Gastrocnemius medialis (tissue), 4 donors: ENCODE measurements at regions of chr1 and their contacts with region 1.

Region 1: GRCh38 chr1:234722904-234723720 is 113.1 kb upstream of the IRF2BP2 start:
- DNase-seq: peak in 1 of 2 donors; percentile 73
- ATAC-seq: peak; percentile 6 to 11
- H3K4me3 ChIP-seq: peak overlapping the region; percentile 5 to 27 (median 10)
- H3K27ac ChIP-seq: peak overlapping the region; percentile 93 to 98 (median 96)
- H3K4me1 ChIP-seq: peaks cover 95 to 96% of the 10 kb centered on the region in 2 donors
- H3K27me3 ChIP-seq: no peaks in the 10 kb centered on the region
- CTCF ChIP-seq: no peak
- POLR2A ChIP-seq: no peak

Region 2: GRCh38 chr1:234413990-234414389 is 309.1 kb before region 1 on chr1:
- in situ Hi-C with region 1: no loop called
- intact Hi-C with region 1: no loop called
- DNase-seq: no peak
- ATAC-seq: no peak
- H3K4me3 ChIP-seq: no peak overlapping the region
- H3K27ac ChIP-seq: no peak overlapping the region
- H3K4me1 ChIP-seq: no peaks in the 10 kb centered on the region
- H3K27me3 ChIP-seq: no peaks in the 10 kb centered on the region
- CTCF ChIP-seq: no peak
- POLR2A ChIP-seq: no peak

Region 3: DNA sequence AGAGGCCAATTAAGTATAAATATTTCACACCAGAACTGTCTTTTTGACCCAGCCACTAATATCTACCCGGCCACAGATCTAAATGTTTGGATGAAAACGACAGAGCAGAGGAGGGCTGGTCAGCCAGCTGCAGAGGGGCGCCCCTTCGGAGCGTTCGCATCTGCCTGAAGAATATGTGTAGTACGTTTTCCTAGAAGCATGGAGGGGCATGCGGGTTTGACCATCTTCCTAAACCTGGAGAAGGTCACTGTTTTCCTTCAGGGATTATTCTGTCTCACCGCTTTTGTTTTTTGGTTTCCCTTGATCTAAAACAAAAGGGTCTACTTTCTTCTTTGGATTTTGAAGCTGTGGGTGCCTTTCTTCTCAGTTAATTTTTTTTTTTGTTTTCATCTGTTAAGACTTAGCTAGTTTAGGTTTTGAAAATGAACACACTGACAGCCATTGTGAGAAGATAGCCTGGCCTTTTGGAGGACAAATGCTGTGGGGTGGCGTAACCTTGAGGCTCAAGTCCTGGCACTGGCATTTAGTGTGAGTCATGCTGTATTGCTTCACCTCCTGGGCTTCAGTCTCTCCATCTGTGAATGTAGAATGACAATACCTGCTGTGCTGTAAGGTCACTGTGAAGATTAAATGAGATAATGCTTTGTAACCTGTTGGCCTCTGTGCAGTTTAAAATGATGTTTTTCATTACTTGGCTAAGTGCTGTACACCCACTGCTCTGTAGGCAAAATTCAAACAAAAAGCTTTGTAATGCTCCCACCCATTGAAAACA is 39.1 kb before region 1 on chr1:
- in situ Hi-C with region 1: no loop called
- intact Hi-C with region 1: loop called (anchors 2 kb)
- DNase-seq: peak; percentile 85 to 91
- ATAC-seq: peak; percentile 100
- H3K4me3 ChIP-seq: no peak overlapping the region
- H3K27ac ChIP-seq: peak overlapping the region; percentile 67 to 83 (median 75)
- H3K4me1 ChIP-seq: peaks cover 8 to 11% of the 10 kb centered on the region in 2 donors
- H3K27me3 ChIP-seq: no peaks in the 10 kb centered on the region
- CTCF ChIP-seq: no peak
- POLR2A ChIP-seq: no peak

Region 4: DNA sequence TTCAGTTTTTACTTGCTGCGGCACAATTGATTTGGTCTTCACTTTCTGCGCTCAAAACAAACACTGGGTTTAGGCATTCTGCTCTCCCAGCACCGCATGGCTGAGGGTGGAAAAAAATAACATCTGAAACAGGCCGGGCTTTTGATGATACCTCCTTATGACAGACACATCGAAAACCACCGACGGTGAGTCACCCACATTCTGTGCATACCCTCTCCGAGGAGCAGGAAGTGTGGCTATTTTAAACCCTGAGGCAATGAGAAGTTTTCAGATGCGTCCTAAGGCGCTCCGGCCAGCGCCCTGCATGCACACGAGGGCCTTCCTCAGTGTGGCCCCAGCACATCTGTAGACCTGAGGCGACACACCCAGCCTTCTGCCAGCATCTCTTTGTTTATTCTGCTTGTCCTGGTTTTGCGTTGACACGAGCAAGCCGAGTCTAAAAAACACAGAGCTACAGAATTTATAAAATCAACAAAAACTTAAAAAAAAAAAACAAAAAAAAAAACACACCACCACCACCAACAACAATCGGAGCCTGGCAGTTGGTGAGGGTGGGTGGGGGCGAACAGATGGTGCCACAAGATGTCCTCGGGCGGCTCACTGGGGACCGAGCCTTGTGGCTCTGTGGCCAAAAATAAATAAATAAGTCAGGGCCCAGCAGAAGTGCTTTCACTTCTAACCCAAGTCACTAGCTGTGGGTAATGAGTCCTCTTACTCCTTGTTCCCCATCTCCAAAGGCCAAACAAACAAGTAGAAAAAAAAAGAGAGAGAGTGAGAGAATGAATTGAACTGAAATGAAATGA is 49.4 kb after region 1 on chr1:
- in situ Hi-C with region 1: no loop called
- intact Hi-C with region 1: loop called (anchors 1 kb)
- DNase-seq: peak; percentile 90 to 92
- ATAC-seq: peak; percentile 99
- H3K4me3 ChIP-seq: no peak overlapping the region
- H3K27ac ChIP-seq: peak overlapping the region; percentile 63 to 77 (median 70)
- H3K4me1 ChIP-seq: peaks cover 13 to 18% of the 10 kb centered on the region in 2 donors
- H3K27me3 ChIP-seq: peaks cover 12 to 13% (median 13%) of the 10 kb centered on the region in 3 donors
- CTCF ChIP-seq: no peak
- POLR2A ChIP-seq: peak; percentile 43 to 66

Region 5: GRCh38 chr1:234887016-234887900 is 164.1 kb after region 1 on chr1:
- in situ Hi-C with region 1: loop called in 1 of 4 experiments (anchors 25 kb)
- intact Hi-C with region 1: loop called (anchors 5 kb)
- DNase-seq: peak; percentile 59 to 82
- ATAC-seq: peak; percentile 48 to 57
- H3K4me3 ChIP-seq: peak overlapping the region in 3 of 4 donors; percentile 3 to 42 (median 18)
- H3K27ac ChIP-seq: peak overlapping the region; percentile 90 to 100 (median 96)
- H3K4me1 ChIP-seq: peaks cover 36 to 38% of the 10 kb centered on the region in 2 donors
- H3K27me3 ChIP-seq: no peaks in the 10 kb centered on the region
- CTCF ChIP-seq: no peak
- POLR2A ChIP-seq: peak in 1 of 2 donors; percentile 25

Region 6: DNA sequence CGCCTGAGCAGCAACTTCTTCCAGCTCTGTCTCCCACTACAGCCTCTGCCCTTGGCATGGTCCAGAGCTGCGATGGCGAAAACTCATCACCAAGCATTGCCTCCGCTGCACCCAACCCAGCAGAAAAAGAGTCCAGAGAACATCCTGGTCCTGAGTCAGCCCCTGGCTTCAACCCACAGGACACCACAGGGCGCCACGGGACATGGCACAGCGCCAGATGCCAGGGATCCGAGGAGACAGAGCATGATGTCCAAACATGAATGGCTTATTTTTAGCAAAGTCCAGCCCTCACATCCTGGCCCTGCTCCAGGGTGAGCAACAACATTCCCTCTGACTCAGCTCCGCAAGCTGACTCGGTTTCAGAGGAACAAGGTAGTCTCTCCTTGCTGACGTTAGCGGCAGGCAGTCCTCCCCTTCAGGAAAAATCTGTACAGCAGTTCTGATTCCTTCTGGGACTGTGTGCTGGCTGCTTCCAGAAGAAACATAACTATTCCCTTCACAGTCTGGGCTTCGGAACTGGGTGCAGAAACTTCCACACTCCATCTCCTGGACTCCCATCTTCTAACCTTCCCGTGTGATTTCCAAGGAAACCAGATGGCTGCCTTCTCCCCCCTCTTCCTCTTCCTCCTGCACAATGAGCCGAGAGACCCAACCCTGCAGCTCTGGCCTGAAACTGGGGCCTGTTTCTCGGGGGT is 274.2 kb after region 1 on chr1:
- in situ Hi-C with region 1: no loop called
- intact Hi-C with region 1: loop called (anchors 5 kb)
- DNase-seq: peak; percentile 99 to 100
- ATAC-seq: peak; percentile 88 to 93
- H3K4me3 ChIP-seq: peak overlapping the region in 3 of 4 donors; percentile 12 to 24 (median 18)
- H3K27ac ChIP-seq: peak overlapping the region; percentile 93 to 99 (median 94)
- H3K4me1 ChIP-seq: peaks cover 25 to 28% of the 10 kb centered on the region in 2 donors
- H3K27me3 ChIP-seq: no peaks in the 10 kb centered on the region
- CTCF ChIP-seq: peak in 1 of 5 experiments; percentile 11
- POLR2A ChIP-seq: peak; percentile 59 to 73

Region 7: DNA sequence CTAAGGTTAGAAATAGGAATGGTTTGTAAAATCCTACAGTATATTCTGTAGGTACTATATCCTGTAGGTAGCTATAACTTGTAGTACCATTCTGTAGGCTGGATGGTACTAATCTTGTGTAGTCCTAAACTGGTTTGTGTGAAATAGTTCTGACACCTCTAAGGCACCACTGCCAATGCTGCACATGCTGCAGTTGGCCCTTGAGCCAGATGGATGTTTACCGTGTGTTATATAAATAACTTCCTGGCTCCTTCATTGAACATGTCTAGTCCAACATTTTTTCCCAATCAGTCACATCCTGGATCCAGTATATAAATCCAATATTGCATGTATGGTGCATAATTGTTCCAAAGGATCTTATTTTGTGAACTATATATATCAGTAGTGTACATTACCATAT is 1016.0 kb after region 1 on chr1:
- in situ Hi-C with region 1: no loop called
- intact Hi-C with region 1: no loop called
- DNase-seq: no peak
- ATAC-seq: peak in 1 of 2 donors; percentile 73
- H3K4me3 ChIP-seq: no peak overlapping the region
- H3K27ac ChIP-seq: no peak overlapping the region
- H3K4me1 ChIP-seq: no peaks in the 10 kb centered on the region
- H3K27me3 ChIP-seq: no peaks in the 10 kb centered on the region
- CTCF ChIP-seq: no peak
- POLR2A ChIP-seq: no peak